Gastrocnemius medialis (tissue), 4 donors: ENCODE measurements at regions of chr11 and their contacts with region 1.

Region 1: GRCh38 chr11:78659326-78660270 is 84.9 kb upstream of the NARS2 start:
- DNase-seq: no peak
- ATAC-seq: no peak
- H3K4me3 ChIP-seq: no peak overlapping the region
- H3K27ac ChIP-seq: no peak overlapping the region
- H3K4me1 ChIP-seq: no peaks in the 10 kb centered on the region
- H3K27me3 ChIP-seq: no peaks in the 10 kb centered on the region
- CTCF ChIP-seq: no peak
- POLR2A ChIP-seq: no peak

Region 2: DNA sequence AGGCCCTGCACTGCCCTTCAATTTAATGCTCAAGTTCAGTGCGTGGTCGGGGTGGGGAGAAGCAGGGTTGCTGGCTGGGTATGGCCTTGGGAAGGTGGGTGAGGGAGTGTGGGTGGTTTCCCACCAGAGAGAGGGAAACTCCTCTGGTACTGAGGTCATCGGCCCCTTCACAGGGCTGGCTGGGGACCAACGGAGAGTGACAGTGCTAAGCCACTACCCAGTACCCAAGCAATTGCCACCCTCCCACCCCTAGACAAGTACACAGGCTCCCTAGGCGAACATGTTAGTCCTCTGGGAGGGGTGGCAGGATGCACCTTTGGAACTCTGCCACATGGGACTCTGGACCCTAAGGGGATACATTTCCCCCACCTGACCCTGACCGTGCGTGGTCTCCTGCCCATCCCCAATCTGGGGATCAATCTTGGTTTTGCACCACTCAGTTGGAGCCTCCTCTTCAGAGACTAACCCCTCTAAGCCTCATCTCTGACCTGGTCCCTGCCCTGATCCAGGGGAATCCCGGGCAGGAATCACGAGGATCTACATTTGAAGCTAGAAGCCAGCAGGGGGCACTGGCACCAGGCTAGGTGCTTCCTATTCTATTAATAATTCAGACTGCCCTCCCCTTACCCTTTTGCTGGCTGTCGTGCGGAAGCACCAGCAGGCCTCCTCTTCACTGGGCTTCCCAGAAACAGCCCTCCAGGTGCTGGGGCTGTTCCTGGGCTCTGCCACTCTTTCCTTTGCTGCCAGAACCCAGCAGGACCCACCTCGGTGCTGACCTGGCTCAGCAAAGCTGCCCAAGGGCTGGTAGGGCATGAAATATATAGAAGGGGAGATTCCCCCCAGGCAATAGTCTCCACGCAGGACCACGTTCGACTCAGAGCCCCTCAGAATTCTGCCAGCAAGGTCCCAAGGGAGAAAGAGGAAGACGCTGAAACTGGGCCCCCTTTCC is 403.5 kb after region 1 on chr11:
- in situ Hi-C with region 1: loop called in 1 of 4 experiments (anchors 25 kb)
- intact Hi-C with region 1: no loop called
- DNase-seq: peak in 1 of 2 donors; percentile 30
- ATAC-seq: peak; percentile 69 to 73
- H3K4me3 ChIP-seq: no peak overlapping the region
- H3K27ac ChIP-seq: no peak overlapping the region
- H3K4me1 ChIP-seq: peaks cover 0 to 3% of the 10 kb centered on the region in 2 donors
- H3K27me3 ChIP-seq: no peaks in the 10 kb centered on the region
- CTCF ChIP-seq: peak in 4 of 5 experiments; percentile 22 to 38 (median 32)
- POLR2A ChIP-seq: no peak

Region 3: GRCh38 chr11:79076526-79077115 is 417.0 kb after region 1 on chr11:
- in situ Hi-C with region 1: loop called in 2 of 4 experiments (anchors 25 kb)
- intact Hi-C with region 1: no loop called
- DNase-seq: no peak
- ATAC-seq: no peak
- H3K4me3 ChIP-seq: no peak overlapping the region
- H3K27ac ChIP-seq: no peak overlapping the region
- H3K4me1 ChIP-seq: no peaks in the 10 kb centered on the region
- H3K27me3 ChIP-seq: no peaks in the 10 kb centered on the region
- CTCF ChIP-seq: peak; percentile 5 to 52 (median 30)
- POLR2A ChIP-seq: no peak